ENCODE measurements at regions of chr12 and their contacts with region 1.

Region 1: GRCh38 chr12:3202734-3203446 is 125.7 kb downstream of the TSPAN9 start:
- DNase-seq: peak; percentile 65 to 79
- ATAC-seq: peak; percentile 43 to 69 (median 60)
- H3K4me3 ChIP-seq: peak overlapping the region; percentile 71
- H3K27ac ChIP-seq: peak overlapping the region; percentile 3
- H3K4me1 ChIP-seq: peaks cover 58% of the 10 kb centered on the region
- H3K27me3 ChIP-seq: no peaks in the 10 kb centered on the region
- CTCF ChIP-seq: peak; percentile 90

Region 2: DNA sequence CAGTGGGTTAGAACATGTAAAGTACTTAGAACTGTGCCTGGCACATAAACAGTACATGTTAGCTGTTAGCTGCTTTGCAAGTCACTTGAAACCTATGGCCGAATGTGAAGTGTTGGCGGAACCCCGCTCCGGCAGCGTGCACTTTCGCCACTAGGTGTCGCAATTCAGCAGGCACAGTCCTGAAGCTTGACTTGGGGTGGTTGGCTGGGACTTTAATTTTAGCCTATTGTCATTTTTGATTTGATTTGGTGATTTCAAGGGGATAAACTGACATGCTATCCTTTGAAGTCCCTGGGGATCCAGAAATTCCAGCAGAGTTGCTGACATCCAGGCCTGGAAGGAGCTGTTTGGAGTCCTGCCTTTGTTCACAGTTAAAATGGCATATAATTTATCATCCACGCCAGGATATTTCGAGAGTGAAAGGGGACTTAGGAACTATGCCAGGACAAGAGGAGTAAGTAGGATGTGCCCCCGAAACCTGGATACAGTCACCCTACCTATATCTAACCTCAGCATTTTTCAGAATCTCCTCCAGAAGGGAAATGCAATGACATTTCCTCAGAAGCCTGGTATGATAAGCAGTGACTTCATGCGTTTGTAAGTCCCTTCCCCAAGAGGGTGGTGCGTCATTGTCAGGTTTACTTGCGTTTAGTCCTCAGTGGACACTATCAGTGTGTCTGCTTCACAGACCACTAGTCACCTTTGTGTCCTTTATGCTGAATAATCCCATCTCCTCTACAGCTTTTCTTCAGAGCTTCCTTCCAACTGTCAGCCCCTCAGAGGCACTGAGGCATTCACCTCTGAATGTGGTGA is 129.2 kb before region 1 on chr12:
- intact Hi-C with region 1: loop called (anchors 5 kb)
- DNase-seq: peak; percentile 84 to 92
- ATAC-seq: peak; percentile 48 to 71 (median 58)
- H3K4me3 ChIP-seq: peak overlapping the region; percentile 1
- H3K27ac ChIP-seq: no peak overlapping the region
- H3K4me1 ChIP-seq: peaks cover 24% of the 10 kb centered on the region
- H3K27me3 ChIP-seq: no peaks in the 10 kb centered on the region
- CTCF ChIP-seq: peak; percentile 98

Region 3: DNA sequence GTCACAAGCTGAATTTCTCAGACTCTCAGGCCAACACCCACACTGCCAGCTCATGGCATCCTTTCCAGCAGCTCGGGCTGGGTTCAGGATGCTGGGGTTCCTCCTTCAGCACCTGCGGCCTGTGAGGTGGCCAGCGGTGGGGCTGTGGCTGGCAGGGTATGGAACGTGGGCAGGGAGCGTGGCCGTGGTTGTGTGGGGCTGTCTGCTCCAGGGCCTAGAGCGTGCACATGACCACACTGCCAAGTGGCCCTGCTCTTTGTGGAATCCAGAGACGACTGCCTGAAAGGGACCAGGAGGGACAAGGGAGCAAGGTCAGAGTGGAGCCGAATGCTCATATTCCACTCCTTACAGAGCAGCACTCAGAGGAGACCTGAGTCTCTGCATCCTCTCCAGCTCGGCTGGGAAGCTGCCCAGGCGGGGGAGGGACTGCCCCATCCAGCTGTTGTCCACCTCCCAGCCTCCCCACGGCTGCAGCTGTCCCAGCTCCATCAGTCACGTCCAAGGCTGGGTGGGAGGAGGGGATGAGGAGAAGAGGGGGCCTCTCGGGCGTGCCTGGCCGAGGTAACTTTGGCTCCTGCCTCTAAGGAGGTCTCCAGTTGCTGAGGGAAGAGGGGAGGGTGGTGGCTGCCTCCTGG is 54.4 kb before region 1 on chr12:
- intact Hi-C with region 1: loop called in 1 of 2 experiments (anchors 5 kb)
- DNase-seq: peak; percentile 63 to 78
- ATAC-seq: peak in 3 of 4 donors; percentile 48 to 53 (median 48)
- H3K4me3 ChIP-seq: no peak overlapping the region
- H3K27ac ChIP-seq: no peak overlapping the region
- H3K4me1 ChIP-seq: peaks cover 34% of the 10 kb centered on the region
- H3K27me3 ChIP-seq: no peaks in the 10 kb centered on the region
- CTCF ChIP-seq: no peak

Region 4: GRCh38 chr12:3236345-3237187 is 33.7 kb after region 1 on chr12:
- intact Hi-C with region 1: loop called (anchors 5 kb)
- DNase-seq: peak; percentile 49 to 73
- ATAC-seq: peak; percentile 70 to 82 (median 80)
- H3K4me3 ChIP-seq: no peak overlapping the region
- H3K27ac ChIP-seq: peak overlapping the region; percentile 63
- H3K4me1 ChIP-seq: peaks cover 50% of the 10 kb centered on the region
- H3K27me3 ChIP-seq: no peaks in the 10 kb centered on the region
- CTCF ChIP-seq: no peak

Region 5: DNA sequence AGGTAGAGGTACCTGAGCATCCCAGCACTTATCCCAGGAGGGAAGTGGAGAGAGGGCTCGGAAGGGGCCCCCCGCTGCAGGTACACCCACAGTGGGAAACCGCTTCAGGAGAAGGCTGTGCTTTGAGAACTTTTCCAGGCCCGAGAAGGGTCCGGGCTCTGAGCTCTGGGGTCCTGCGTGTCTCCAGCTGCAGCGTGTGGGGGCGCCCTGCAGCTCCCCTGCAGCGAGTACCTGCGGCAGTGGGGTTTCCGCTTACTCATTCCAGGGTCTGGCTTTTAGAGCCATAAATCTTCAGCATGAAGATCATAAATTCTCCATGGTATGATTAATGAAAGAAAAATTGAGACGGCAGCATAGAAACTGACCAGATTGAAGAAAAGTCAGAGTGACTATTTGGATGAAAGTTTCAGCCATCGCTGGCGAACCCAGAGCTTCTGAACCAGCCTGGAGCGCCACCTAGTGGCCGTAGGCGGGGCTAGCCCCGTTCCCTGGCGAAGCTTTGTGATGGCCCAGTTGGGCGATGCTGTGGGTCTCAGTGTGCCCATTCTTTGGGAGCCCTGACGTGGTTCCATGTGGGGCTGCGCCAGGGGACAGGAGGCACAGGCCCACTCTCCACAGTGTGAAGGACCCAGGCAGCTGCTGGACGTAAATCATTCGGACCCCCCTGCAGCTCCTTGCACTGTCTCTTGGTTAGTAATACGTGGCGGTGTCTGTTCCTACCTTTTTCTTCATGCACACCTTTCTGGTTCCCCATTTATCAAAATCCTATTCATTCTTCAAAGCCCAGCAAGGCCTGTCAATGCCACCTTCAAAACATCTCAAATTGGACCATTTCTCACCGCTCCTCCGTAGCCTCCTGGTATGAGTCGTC is 72.5 kb after region 1 on chr12:
- intact Hi-C with region 1: loop called (anchors 5 kb)
- DNase-seq: peak; percentile 73 to 89
- ATAC-seq: peak; percentile 77 to 92 (median 84)
- H3K4me3 ChIP-seq: no peak overlapping the region
- H3K27ac ChIP-seq: no peak overlapping the region
- H3K4me1 ChIP-seq: peaks cover 4% of the 10 kb centered on the region
- H3K27me3 ChIP-seq: no peaks in the 10 kb centered on the region
- CTCF ChIP-seq: peak; percentile 99

Region 6: DNA sequence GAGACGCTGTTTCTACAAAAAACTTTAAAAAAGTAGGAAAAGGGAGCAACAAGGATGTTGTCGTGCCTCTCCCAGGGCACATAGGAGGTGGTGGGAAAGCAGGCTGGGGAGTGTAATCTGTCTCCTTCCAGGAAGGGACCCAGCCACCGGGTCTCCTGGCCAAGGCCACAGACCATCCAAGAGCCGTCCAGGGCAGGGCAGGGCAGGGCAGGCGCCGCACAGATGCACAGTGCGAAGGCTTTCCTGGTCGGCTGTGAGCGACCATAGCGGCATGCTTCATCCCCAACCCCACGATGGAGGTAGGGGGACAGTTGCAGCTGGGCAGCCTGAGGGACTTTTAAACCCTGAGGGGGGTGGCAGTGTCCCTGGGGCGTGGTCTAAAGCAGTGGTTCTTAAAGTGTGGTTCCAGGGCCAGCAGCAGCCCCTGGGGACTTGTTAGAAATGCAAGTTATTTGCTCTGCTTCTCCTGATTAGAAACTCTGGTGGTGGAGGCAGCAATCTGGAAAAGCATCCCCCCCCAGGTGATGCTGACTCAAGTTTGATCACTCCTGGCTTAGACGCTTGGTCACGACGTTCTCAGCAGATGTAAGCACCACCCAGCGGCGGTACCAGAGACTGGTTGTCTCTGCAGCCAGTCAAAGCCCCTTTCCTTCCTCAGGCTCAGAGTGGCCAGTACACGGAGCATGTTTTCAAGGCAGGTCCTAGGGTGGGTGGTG is 90.7 kb after region 1 on chr12:
- intact Hi-C with region 1: no loop called
- DNase-seq: no peak
- ATAC-seq: peak in 1 of 4 donors; percentile 25
- H3K4me3 ChIP-seq: no peak overlapping the region
- H3K27ac ChIP-seq: no peak overlapping the region
- H3K4me1 ChIP-seq: peaks cover 10% of the 10 kb centered on the region
- H3K27me3 ChIP-seq: peaks cover 0 to 4% (median 0%) of the 10 kb centered on the region in 3 donors
- CTCF ChIP-seq: no peak

Measured in psoas muscle (tissue), 8 donors.